Activated CD4-positive, alpha-beta T cell treated with anti-CD3 and anti-CD28 coated beads for 36 hours (primary cell): ENCODE measurements at regions of chr13 and their contacts with region 1.

Region 1: GRCh38 chr13:45367358-45367757 is 26.4 kb upstream of the TPT1 start:
- DNase-seq: peak; percentile 96
- ATAC-seq: peak; percentile 100
- H3K4me3 Mint-ChIP-seq: peak overlapping the region; percentile 21
- H3K27ac Mint-ChIP-seq: peak overlapping the region; percentile 89
- H3K4me1 Mint-ChIP-seq: peaks cover 53% of the 10 kb centered on the region
- H3K27me3 Mint-ChIP-seq: no peaks in the 10 kb centered on the region

Region 2: DNA sequence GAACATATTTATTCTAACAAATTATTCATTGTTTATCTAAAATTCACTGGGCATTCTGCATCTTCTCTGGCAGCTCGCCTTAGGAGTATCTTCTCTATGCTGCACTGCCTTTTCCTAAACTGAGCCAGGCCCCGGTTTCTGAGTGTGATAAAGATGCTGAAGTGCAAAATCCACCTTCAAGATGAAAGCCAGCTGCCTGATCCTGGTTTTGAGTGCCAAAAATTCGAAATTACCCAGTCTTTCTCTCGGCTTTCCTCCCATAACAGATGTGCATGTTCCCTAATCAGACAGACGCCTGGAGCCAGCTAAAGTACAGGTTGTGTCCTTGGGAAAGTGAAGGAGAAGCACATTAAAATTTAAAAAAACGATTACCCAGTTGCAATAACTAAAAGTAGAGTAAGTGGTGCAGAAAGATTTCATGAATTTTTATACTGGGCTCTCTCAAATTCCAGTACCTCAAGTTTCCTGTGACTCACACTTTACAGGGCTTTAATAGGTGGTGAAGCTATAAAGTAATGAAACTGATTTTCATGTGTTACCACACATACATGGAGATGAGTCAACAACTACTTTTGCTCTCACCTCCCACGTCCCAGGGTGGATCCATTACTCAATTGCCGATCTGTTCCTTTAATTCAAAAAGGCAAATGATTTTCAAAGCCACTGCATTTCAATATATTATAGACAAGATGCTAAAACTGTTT is 312.0 kb before region 1 on chr13:
- CTCF ChIA-PET with region 1: no interaction called
- POLR2A ChIA-PET with region 1: no interaction called
- intact Hi-C with region 1: loop called in 1 of 2 experiments (anchors 1 kb)
- DNase-seq: peak; percentile 83
- ATAC-seq: peak; percentile 99
- H3K4me3 Mint-ChIP-seq: no peak overlapping the region
- H3K27ac Mint-ChIP-seq: no peak overlapping the region
- H3K4me1 Mint-ChIP-seq: peaks cover 28% of the 10 kb centered on the region
- H3K27me3 Mint-ChIP-seq: peaks cover 38% of the 10 kb centered on the region

Region 3: DNA sequence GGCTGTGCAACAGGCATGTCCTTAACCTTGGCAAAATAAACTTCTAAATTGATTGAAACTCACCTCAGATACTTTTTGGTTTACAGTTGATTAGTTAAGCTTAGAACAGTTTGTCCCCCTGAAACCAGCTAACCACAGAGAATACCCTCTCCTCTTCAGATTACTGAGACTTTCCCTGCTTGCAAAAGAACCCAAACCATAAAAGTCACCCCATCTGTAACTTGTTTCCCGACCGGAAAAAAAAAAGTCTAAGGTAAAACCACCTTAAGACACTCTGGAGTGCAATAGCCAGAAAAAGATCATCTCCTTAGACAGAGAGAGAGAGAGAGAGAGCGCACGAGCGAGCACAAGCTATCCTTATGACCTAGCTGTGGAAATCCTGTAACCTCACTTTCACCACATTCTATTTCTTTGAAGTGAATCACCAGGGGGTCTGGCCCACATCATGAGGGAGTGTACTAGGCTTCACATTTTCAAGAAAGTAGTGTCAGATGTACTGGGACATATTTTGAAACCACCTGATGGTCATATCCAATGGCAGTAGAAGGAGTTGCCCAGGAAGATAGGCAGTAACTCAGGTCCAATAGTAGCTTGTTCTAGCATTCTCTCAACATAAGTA is 258.1 kb before region 1 on chr13:
- CTCF ChIA-PET with region 1: no interaction called
- POLR2A ChIA-PET with region 1: no interaction called
- intact Hi-C with region 1: no loop called
- DNase-seq: peak; percentile 20
- ATAC-seq: peak; percentile 90
- H3K4me3 Mint-ChIP-seq: no peak overlapping the region
- H3K27ac Mint-ChIP-seq: no peak overlapping the region
- H3K4me1 Mint-ChIP-seq: peaks cover 6% of the 10 kb centered on the region
- H3K27me3 Mint-ChIP-seq: peaks cover 10% of the 10 kb centered on the region

Region 4: GRCh38 chr13:45289936-45290563 is 77.3 kb before region 1 on chr13:
- CTCF ChIA-PET with region 1: no interaction called
- POLR2A ChIA-PET with region 1: no interaction called
- intact Hi-C with region 1: no loop called
- DNase-seq: no peak
- ATAC-seq: no peak
- H3K4me3 Mint-ChIP-seq: no peak overlapping the region
- H3K27ac Mint-ChIP-seq: no peak overlapping the region
- H3K4me1 Mint-ChIP-seq: peaks cover 2% of the 10 kb centered on the region
- H3K27me3 Mint-ChIP-seq: no peaks in the 10 kb centered on the region

Region 5: DNA sequence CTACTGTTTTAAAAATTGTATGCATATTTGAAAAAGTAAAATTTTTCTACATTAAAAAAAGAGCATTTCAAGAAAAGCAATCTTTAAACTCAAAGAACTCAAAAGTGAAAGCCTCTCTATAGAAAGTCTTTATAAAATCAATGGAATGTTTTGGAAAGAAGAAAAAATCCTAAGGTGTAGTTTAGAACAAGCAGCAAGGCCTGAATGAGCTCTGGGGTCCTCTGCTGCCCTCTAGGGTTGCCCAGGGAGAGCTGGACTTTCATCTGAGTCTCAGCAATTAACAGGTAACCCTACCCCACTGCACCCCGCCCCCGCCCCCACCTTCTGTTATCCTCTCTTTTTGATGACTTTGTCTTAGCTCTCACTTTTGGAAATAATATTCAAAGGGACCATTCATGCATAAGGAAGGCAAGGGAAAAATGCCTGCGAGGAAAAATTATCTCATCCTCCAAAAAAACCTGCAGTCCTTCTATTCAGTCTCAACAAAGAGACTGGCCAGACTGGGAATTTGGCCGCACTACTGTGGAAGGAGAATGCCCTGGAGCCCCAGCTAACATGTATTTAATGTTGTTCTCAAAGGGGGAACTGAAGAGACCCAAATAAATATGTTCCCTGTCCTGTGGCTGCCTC is 26.7 kb after region 1 on chr13:
- CTCF ChIA-PET with region 1: interaction called, 79 read pairs
- POLR2A ChIA-PET with region 1: interaction called, 3 read pairs
- intact Hi-C with region 1: loop called (anchors 1 to 2 kb)
- DNase-seq: peak; percentile 56
- ATAC-seq: no peak
- H3K4me3 Mint-ChIP-seq: no peak overlapping the region
- H3K27ac Mint-ChIP-seq: no peak overlapping the region
- H3K4me1 Mint-ChIP-seq: peaks cover 46% of the 10 kb centered on the region
- H3K27me3 Mint-ChIP-seq: no peaks in the 10 kb centered on the region

Region 6: GRCh38 chr13:45417790-45418534 is 50.6 kb after region 1 on chr13 and contains the start of gene SLC25A30:
- CTCF ChIA-PET with region 1: interaction called, 10 read pairs
- POLR2A ChIA-PET with region 1: interaction called, 3 read pairs
- intact Hi-C with region 1: loop called (anchors 1 to 5 kb)
- DNase-seq: peak; percentile 94
- ATAC-seq: peak; percentile 92
- H3K4me3 Mint-ChIP-seq: peak within 1 kb of the TSS; percentile 84
- H3K27ac Mint-ChIP-seq: peak within 1 kb of the TSS; percentile 92
- H3K4me1 Mint-ChIP-seq: peaks cover 23% of the 10 kb centered on the region
- H3K27me3 Mint-ChIP-seq: no peaks in the 10 kb centered on the region
- total RNA-seq, gene SLC25A30: 17.7 to 18.4 TPM

Region 7: GRCh38 chr13:45464687-45465453 is 97.5 kb after region 1 on chr13 and contains the start of gene COG3:
- CTCF ChIA-PET with region 1: interaction called, 11 read pairs
- POLR2A ChIA-PET with region 1: interaction called, 3 read pairs
- intact Hi-C with region 1: loop called in 1 of 2 experiments (anchors 1 kb)
- DNase-seq: peak; percentile 97
- ATAC-seq: peak; percentile 99
- H3K4me3 Mint-ChIP-seq: peak within 1 kb of the TSS; percentile 93
- H3K27ac Mint-ChIP-seq: peak within 1 kb of the TSS; percentile 93
- H3K4me1 Mint-ChIP-seq: peaks cover 49% of the 10 kb centered on the region
- H3K27me3 Mint-ChIP-seq: no peaks in the 10 kb centered on the region
- total RNA-seq, gene COG3: 18.0 to 19.6 TPM

Region 8: GRCh38 chr13:45490068-45490467 is 122.7 kb after region 1 on chr13:
- CTCF ChIA-PET with region 1: interaction called, 9 read pairs
- POLR2A ChIA-PET with region 1: no interaction called
- intact Hi-C with region 1: loop called (anchors 1 to 2 kb)
- DNase-seq: peak; percentile 36
- ATAC-seq: peak; percentile 53
- H3K4me3 Mint-ChIP-seq: no peak overlapping the region
- H3K27ac Mint-ChIP-seq: no peak overlapping the region
- H3K4me1 Mint-ChIP-seq: peaks cover 6% of the 10 kb centered on the region
- H3K27me3 Mint-ChIP-seq: no peaks in the 10 kb centered on the region

Region 9: GRCh38 chr13:45511310-45512097 is 144.1 kb after region 1 on chr13:
- CTCF ChIA-PET with region 1: interaction called, 5 read pairs
- POLR2A ChIA-PET with region 1: no interaction called
- intact Hi-C with region 1: loop called in 1 of 2 experiments (anchors 1 kb)
- DNase-seq: peak; percentile 25
- ATAC-seq: peak; percentile 89
- H3K4me3 Mint-ChIP-seq: no peak overlapping the region
- H3K27ac Mint-ChIP-seq: peak overlapping the region; percentile 66
- H3K4me1 Mint-ChIP-seq: peaks cover 14% of the 10 kb centered on the region
- H3K27me3 Mint-ChIP-seq: no peaks in the 10 kb centered on the region